ENCODE measurements at regions of chr3 and their contacts with region 1.

Region 1: GRCh38 chr3:46923559-46924350 is 46.2 kb downstream of the PTH1R start:
- DNase-seq: peak in 1 of 2 experiments; percentile 75
- H3K4me3 ChIP-seq: no peak overlapping the region
- H3K27ac ChIP-seq: no peak overlapping the region; the same call in 1 of the 2 replicates
- H3K4me1 ChIP-seq: no peaks in the 10 kb centered on the region
- H3K27me3 ChIP-seq: no peaks in the 10 kb centered on the region
- CTCF ChIP-seq: peak; percentile 65 to 79 (median 72)
- EP300 ChIP-seq: no peak
- POLR2A ChIP-seq: no peak
- RAD21 ChIP-seq: peak; percentile 74 to 77

Region 2: DNA sequence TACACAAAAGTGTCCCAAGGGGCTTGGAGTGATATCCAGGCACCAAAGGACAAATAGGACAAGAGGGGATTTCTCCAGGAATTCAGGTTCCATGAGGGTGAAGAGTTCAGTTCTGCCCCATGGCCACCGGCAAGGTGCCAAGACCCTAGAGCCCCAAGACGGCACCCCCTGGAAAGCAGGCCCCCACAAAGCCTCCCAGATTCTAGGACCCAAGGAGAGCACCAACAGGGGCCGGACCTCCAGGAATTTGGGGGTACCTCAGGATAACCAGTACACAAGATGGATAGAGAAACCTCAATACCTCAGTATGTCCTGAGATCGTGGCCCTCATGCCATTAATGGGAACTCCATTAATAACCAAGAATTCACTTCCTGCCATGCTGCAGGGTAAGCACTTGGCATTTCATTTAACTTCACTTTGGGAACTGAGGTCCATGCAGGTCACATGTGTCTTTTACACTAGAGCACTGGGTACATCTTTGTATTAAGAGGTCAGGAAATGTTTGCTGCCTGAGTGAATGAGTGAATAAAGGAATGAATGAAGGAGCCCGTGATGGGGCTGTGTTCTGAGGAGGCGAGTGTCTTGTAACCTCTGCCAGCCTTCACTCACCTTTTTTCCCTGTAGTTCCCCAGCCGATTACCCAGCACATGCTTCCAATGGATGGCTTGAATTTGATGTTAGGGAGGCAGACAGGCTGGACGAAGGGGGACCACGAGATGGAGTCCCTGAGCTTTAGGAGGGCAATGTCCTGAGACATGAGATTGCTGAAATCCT is 190.5 kb before region 1 on chr3:
- CTCF ChIA-PET with region 1: no interaction called
- POLR2A ChIA-PET with region 1: no interaction called
- DNase-seq: no peak
- H3K4me3 ChIP-seq: no peak overlapping the region
- H3K27ac ChIP-seq: no peak overlapping the region
- H3K4me1 ChIP-seq: no peaks in the 10 kb centered on the region
- H3K27me3 ChIP-seq: no peaks in the 10 kb centered on the region
- CTCF ChIP-seq: peak in 1 of 3 experiments; percentile 10; a peak in 1 of 4 replicates
- EP300 ChIP-seq: no peak
- POLR2A ChIP-seq: no peak
- RAD21 ChIP-seq: peak in 1 of 2 experiments; percentile 27; a peak in 1 of 4 replicates

Region 3: GRCh38 chr3:46829699-46830208 is 94.0 kb before region 1 on chr3:
- CTCF ChIA-PET with region 1: no interaction called
- POLR2A ChIA-PET with region 1: no interaction called
- DNase-seq: peak in 1 of 2 experiments; percentile 36
- H3K4me3 ChIP-seq: no peak overlapping the region
- H3K27ac ChIP-seq: no peak overlapping the region
- H3K4me1 ChIP-seq: peaks cover 0 to 3% (median 0%) of the 10 kb centered on the region in 4 experiments; a peak in 1 of 7 replicates
- H3K27me3 ChIP-seq: no peaks in the 10 kb centered on the region; a peak in 1 of 7 replicates
- CTCF ChIP-seq: no peak
- EP300 ChIP-seq: no peak
- POLR2A ChIP-seq: no peak
- RAD21 ChIP-seq: no peak

Region 4: GRCh38 chr3:46909535-46910442 is 14.0 kb before region 1 on chr3:
- CTCF ChIA-PET with region 1: interaction called, 28 read pairs
- POLR2A ChIA-PET with region 1: interaction called, 4 read pairs
- DNase-seq: peak; percentile 65 to 95
- H3K4me3 ChIP-seq: no peak overlapping the region
- H3K27ac ChIP-seq: no peak overlapping the region
- H3K4me1 ChIP-seq: peaks cover 0 to 3% (median 1%) of the 10 kb centered on the region in 4 experiments; a peak in 2 of 7 replicates
- H3K27me3 ChIP-seq: no peaks in the 10 kb centered on the region; a peak in 2 of 7 replicates
- CTCF ChIP-seq: peak in 2 of 3 experiments; percentile 88 to 97; a peak in 3 of 4 replicates
- EP300 ChIP-seq: no peak
- POLR2A ChIP-seq: no peak
- RAD21 ChIP-seq: peak; percentile 97 to 98

Region 5: DNA sequence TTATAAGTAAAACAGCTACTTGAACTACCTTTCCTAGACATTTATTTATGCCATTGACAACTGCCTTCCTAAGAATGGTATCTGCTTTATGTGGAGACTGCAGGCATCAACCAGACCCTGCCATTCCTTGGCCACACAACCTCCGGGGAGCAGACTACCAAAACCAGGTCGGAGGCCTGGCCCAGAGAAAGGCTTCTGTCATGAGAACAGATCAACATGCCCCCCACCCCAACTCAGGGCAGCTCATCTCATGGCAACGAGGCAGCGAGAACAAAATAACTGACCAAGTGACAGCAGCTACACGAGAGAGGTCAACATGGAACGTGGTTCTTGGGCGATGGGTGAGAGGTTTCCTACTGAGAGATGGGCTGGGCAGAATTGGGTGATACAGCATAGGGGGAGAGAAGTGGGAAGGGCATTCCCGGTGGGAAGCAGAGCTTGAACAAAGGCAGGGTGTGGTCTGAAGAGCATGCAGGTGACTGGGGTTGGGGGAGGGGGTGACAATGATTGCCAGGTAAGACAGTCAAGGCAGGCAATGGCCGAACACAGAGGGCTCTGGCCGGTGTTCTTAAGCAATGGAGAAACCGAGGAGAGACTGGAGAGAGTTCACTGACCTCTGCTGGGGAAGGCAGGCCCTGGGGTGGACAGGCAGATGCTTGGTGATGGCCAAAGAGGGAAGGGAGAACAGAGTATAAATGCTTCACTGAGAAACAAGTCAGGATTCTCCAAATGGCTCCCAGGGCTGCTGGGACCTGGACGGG is 18.9 kb after region 1 on chr3:
- CTCF ChIA-PET with region 1: interaction called, 99 read pairs
- POLR2A ChIA-PET with region 1: no interaction called
- DNase-seq: no peak
- H3K4me3 ChIP-seq: no peak overlapping the region
- H3K27ac ChIP-seq: no peak overlapping the region
- H3K4me1 ChIP-seq: peaks cover 5 to 14% (median 9%) of the 10 kb centered on the region in 4 experiments; a peak in 5 of 7 replicates
- H3K27me3 ChIP-seq: no peaks in the 10 kb centered on the region
- CTCF ChIP-seq: no peak
- EP300 ChIP-seq: no peak
- POLR2A ChIP-seq: no peak
- RAD21 ChIP-seq: no peak

Region 6: DNA sequence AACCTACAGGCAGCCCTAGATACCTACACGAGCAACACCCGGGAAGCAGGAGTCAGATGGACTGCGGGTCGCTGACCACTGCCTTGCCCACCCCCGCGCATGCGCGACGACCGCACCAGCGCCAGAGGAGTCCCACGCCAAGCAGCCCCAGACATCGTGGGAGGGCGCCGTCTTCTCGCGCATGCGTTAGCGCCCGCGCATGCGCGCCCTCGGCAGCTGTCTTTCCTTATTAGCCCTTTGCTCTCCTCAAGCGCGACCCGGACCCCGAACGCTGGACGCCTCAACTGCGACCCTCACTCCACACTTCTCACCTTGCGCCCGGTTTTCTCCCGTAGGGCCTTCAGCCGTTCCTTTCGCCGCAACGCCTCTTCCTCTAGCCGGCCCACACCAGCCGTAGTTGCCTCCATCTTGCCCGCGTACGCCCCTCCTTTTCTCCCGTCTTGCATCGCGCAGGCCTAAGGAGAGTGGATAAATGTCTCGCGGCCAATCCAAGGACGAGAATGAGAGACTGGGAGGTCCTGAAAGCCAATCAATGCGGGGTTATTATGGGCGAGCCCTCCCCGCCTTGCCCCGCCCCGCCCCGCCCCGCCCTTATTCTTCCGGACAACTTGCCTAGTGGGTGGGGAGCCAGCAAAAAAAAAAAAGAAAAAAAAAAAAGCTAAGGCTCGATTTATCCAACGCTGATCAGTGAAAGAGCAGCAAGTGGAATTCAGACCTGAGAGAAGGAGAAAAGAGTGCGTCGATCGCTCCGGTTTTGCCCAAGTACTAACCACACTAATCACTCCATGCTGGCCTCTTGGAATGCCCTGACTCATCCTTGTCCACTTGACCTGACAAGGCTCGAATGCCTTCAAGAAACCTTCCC is 52.8 kb after region 1 on chr3 and contains the start of gene CCDC12:
- CTCF ChIA-PET with region 1: interaction called, 15 read pairs
- POLR2A ChIA-PET with region 1: interaction called, 8 read pairs
- DNase-seq: peak; percentile 84 to 92
- H3K4me3 ChIP-seq: peak within 1 kb of the TSS; percentile 80 to 98 (median 97)
- H3K27ac ChIP-seq: peak within 1 kb of the TSS; percentile 99
- H3K4me1 ChIP-seq: peaks cover 0 to 18% (median 8%) of the 10 kb centered on the region in 4 experiments; a peak in 6 of 7 replicates
- H3K27me3 ChIP-seq: peaks cover 0 to 9% (median 3%) of the 10 kb centered on the region in 4 experiments; a peak in 3 of 7 replicates
- CTCF ChIP-seq: no peak
- EP300 ChIP-seq: no peak
- POLR2A ChIP-seq: peak in 1 of 2 experiments; percentile 95; a peak in 2 of 3 replicates
- RAD21 ChIP-seq: no peak
- total RNA-seq, gene CCDC12: 41.3 and 44.4 TPM in 2 replicates

Region 7: DNA sequence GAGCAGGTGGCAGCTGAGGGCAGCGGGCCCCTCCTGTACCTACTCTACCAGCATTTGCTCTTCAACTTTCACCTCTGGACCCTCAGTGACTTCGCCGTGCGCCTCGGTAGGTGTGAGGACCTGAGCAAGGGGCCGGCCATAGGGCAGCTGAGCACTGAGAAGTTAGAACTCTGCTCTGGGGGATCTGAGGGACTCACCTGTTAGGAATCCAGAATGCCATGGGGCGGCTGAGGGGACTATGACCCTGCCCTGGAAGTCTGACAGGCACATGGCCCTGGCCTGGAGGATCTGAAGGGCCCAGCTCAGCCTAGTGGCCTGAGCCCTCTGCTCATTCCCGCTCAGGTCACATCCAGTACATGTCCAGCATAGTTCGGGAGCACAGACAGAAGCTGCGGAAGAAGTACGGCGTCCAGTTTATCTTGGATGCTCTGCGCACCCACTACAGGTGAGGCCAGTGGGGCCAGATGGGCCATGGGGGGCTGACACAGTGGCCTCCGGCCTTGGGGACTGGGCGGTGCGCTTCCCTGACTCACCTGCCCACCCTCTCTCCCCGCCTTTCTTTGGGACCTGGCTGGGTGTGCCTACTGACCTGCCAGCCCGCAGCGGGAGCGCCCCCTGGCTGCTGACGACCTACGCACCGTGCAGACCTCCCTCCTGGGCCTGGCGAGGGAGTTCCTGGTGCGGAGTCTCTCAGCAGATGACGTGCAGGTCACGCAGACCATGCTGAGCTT is 74.5 kb after region 1 on chr3:
- CTCF ChIA-PET with region 1: interaction called, 104 read pairs
- POLR2A ChIA-PET with region 1: interaction called, 3 read pairs
- DNase-seq: peak; percentile 74 to 96
- H3K4me3 ChIP-seq: no peak overlapping the region
- H3K27ac ChIP-seq: no peak overlapping the region; the same call in 1 of the 2 replicates
- H3K4me1 ChIP-seq: peaks cover 0 to 3% (median 1%) of the 10 kb centered on the region in 4 experiments; a peak in 3 of 7 replicates
- H3K27me3 ChIP-seq: no peaks in the 10 kb centered on the region
- CTCF ChIP-seq: peak in 2 of 3 experiments; percentile 97 to 98; a peak in 3 of 4 replicates
- EP300 ChIP-seq: no peak
- POLR2A ChIP-seq: no peak
- RAD21 ChIP-seq: peak; percentile 86 to 96

Measured in H1 (cell line).